ENCODE measurements at regions of chr19 and their contacts with region 1.

Region 1: DNA sequence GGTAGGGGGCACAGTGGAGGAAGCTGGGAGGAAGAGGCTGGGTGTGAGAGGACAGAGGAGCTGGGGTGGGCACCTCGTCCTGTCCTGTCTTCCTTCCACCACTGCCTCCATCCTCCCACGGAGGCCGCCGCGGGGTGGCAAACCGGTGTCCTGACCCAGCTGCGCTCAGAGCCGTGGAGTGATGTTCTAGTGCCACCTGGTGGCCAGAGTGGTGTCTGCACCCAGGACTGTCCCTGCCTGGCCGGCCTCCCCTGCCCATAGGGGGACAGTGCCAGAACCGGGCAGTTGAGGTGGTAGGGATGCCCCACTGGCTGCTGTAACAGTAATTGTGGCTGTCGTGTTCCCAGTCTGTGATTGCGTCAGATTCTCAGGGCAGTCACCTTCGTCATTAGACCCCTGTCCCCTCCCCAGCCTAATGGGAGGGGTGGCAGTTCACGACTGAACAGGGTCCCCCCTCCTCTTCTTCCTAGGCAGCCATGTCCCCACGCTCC is 11.1 kb upstream of the ARRDC2 start:
- DNase-seq: peak; percentile 89
- H3K4me3 ChIP-seq: no peak overlapping the region
- H3K27ac ChIP-seq: no peak overlapping the region
- H3K4me1 ChIP-seq: peaks cover 4% of the 10 kb centered on the region
- H3K27me3 ChIP-seq: no peaks in the 10 kb centered on the region
- CTCF ChIP-seq: peak; percentile 96 to 99 (median 98)
- POLR2A ChIP-seq: no peak

Region 2: GRCh38 chr19:17859533-17860330 is 137.1 kb before region 1 on chr19 and contains the start of gene RPL18A:
- intact Hi-C with region 1: loop called (anchors 5 kb)
- DNase-seq: peak; percentile 100
- H3K4me3 ChIP-seq: peak within 1 kb of the TSS; percentile 79 to 95
- H3K27ac ChIP-seq: peak within 1 kb of the TSS; percentile 83 to 85
- H3K4me1 ChIP-seq: peaks cover 18% of the 10 kb centered on the region
- H3K27me3 ChIP-seq: no peaks in the 10 kb centered on the region
- CTCF ChIP-seq: peak; percentile 79 to 90 (median 89)
- POLR2A ChIP-seq: peak; percentile 71
- total RNA-seq, gene RPL18A: 551 to 1,098 TPM

Region 3: GRCh38 chr19:17938092-17938845 is 58.6 kb before region 1 on chr19:
- intact Hi-C with region 1: loop called (anchors 5 kb)
- DNase-seq: peak; percentile 88
- H3K4me3 ChIP-seq: no peak overlapping the region
- H3K27ac ChIP-seq: no peak overlapping the region
- H3K4me1 ChIP-seq: peaks cover 15% of the 10 kb centered on the region
- H3K27me3 ChIP-seq: no peaks in the 10 kb centered on the region
- CTCF ChIP-seq: peak; percentile 84 to 95 (median 85)
- POLR2A ChIP-seq: no peak